WTC11 (cell line): ENCODE measurements at regions of chr12 and their contacts with region 1.

Region 1: DNA sequence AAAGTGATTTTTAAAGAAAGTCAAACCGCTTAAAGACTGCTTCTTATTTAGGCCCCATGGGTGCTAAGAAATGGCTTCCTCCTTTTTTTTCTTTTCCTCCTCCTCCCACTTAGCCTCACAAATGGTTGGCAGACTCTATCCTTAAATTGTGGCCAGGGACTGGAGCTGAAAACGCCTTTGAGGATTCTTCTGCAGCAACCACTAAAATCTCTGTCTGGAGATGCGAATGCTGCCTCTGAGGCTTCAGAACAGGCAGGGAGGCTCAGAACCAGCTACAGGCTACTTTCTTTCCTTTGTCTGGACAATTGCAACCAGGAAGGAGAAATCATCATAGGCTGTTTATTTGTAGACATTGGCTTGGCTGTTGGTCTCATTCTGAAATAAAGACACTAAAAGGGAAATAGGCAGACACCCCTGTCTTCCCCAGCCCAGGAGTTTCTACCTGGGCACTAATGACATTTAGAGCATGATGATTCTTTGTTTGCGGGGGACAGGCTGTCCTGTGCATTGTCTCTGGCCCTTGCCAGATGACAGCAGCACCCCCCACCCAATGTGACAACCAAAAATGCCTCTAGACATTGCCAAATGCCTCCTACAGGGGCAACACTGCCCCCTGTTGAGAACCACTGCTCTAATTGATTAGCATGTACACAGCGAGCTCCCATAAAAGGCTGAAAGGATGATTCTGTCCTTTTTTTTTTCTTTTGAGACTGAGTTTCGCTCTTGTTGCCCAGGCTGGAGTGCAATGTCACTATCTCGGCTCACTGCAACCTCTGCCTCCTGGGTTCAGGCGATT is 50.3 kb downstream of the MAP1LC3B2 start:
- DNase-seq: peak; percentile 50
- ATAC-seq: peak; percentile 60
- H3K4me3 Mint-ChIP-seq: no peak overlapping the region
- H3K27ac Mint-ChIP-seq: no peak overlapping the region; the same call in 1 of the 2 replicates
- H3K4me1 Mint-ChIP-seq: peaks cover 30% of the 10 kb centered on the region
- H3K27me3 Mint-ChIP-seq: peaks cover 2% of the 10 kb centered on the region; the same call in 1 of the 2 replicates
- CTCF ChIP-seq: 0 out of 2 replicates have a peak, but pooled peaks have one; percentile 15

Region 2: DNA sequence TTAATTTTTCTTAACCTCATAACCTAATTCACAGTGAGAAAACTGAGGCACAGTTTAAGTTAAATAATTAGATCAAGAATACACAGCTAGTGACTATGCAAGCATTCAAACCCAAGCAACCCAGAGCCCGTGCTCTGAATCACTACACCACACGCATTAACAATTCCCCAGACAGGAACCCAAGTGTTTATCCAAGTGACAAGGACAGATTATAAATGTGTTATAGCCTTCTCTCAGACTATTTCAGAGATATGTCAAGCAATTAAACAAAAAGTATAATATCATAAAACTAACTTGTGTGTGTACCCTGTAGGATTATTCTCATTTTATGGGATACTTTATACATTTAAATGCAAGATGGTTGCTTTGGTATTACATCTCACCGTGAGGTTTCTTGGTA is 375.8 kb before region 1 on chr12:
- CTCF ChIA-PET with region 1: no interaction called
- POLR2A ChIA-PET with region 1: no interaction called
- DNase-seq: no peak
- ATAC-seq: no peak
- H3K4me3 Mint-ChIP-seq: no peak overlapping the region
- H3K27ac Mint-ChIP-seq: no peak overlapping the region
- H3K4me1 Mint-ChIP-seq: peaks cover 14% of the 10 kb centered on the region
- H3K27me3 Mint-ChIP-seq: no peaks in the 10 kb centered on the region
- CTCF ChIP-seq: no peak

Region 3: DNA sequence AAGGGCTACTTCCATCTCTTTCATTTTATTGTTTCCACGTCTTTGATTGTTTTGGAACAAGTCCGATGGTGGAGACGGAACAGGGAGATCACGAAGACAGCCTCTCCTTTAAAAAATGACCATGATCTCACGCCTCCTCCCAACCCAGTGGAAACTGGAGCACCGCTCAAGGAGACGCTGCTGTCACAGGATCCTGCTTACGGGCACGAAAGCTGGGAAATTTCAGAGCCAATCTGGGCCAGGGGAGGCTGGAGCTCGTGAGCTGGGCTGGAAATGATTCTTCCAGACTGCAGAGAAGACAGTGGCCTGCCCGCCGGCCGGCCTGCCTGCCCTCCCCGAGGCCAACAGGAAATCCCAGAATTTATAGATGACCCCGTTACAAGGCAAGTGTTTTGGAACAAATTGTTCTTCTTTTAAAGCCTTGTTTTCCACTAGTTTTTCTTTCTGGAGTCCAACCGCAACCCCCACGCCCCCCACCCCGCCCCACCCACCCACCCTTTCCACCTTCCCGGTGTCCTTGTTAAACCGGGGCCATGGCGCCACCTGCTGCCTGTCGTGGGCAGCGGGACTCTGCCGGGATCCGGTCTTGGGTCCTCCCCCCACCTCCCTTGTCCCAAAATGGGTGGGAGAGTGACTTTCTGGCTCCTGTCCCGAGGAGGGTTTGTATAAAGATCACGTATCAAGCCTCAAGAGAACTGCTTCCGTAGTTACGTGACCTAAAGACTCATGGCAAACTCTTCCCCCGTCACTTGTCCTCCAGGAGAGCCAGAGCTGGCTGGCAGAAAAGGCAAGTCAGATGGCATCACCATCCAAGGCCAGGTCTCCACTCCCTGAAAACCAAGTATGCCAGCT is 10.0 kb before region 1 on chr12:
- CTCF ChIA-PET with region 1: interaction called, 12 read pairs
- POLR2A ChIA-PET with region 1: no interaction called
- DNase-seq: peak; percentile 86
- ATAC-seq: peak; percentile 83
- H3K4me3 Mint-ChIP-seq: peak overlapping the region; percentile 42
- H3K27ac Mint-ChIP-seq: 0 out of 2 replicates have a peak overlapping the region, but pooled peaks have one; percentile 48
- H3K4me1 Mint-ChIP-seq: peaks cover 40% of the 10 kb centered on the region
- H3K27me3 Mint-ChIP-seq: no peaks in the 10 kb centered on the region
- CTCF ChIP-seq: peak; percentile 62

Region 4: GRCh38 chr12:116687888-116688287 is 78.4 kb after region 1 on chr12:
- CTCF ChIA-PET with region 1: interaction called, 16 read pairs
- POLR2A ChIA-PET with region 1: no interaction called
- DNase-seq: peak; percentile 86
- ATAC-seq: peak; percentile 98
- H3K4me3 Mint-ChIP-seq: no peak overlapping the region
- H3K27ac Mint-ChIP-seq: no peak overlapping the region
- H3K4me1 Mint-ChIP-seq: peaks cover 10% of the 10 kb centered on the region
- H3K27me3 Mint-ChIP-seq: peaks cover 10% of the 10 kb centered on the region
- CTCF ChIP-seq: peak; percentile 77

Region 5: DNA sequence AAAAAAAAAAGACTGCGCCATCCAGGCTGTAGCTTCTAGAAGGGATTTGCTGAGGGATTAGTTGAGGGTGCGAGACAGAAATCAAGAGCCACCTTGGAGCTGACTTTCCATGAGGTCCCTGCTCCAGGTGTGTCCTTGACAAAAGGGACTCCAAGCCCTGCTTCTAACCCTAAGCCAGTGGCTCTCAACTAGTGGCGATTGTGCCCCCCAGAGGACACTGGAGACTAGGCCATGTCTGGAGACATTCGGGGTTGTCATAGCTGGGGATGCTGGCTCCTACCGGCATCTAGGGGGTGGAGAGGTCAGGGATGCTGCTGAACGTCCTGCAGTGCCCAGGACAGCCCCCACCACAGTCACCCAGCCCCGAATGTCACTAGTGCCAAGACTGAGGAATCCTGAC is 87.8 kb after region 1 on chr12:
- CTCF ChIA-PET with region 1: interaction called, 10 read pairs
- POLR2A ChIA-PET with region 1: no interaction called
- DNase-seq: peak; percentile 72
- ATAC-seq: peak; percentile 89
- H3K4me3 Mint-ChIP-seq: no peak overlapping the region
- H3K27ac Mint-ChIP-seq: no peak overlapping the region
- H3K4me1 Mint-ChIP-seq: peaks cover 18% of the 10 kb centered on the region
- H3K27me3 Mint-ChIP-seq: peaks cover 17% of the 10 kb centered on the region
- CTCF ChIP-seq: no peak